IMR-90 (cell line): ENCODE measurements at regions of chr18 and their contacts with region 1.

Region 1: DNA sequence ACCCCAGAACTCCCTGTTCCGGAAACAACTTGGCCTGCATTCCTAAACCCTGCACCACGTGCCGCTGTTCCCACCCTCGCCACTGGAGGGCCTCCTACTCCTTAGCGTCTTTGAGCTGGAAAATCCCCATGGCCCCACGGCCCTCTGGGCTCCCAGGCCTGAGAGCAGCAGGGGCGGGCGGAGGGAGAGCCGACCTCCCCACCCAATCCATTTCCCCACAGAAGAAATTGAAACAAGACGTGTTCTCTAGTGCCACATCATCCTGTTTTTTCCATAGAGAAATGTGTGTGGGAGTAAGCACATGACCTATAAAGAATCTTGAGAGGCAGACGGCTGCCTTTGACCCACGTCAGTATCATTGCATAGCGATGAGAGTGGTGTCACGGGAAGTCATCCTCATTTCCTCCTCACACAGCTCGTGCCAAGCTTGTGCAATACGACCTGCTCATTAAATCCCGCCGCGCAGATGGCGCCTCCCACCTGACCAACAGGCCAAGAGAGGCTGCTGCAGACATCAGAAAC is 79.2 kb downstream of the LAMA1 start:
- DNase-seq: peak; percentile 99
- ATAC-seq: peak; percentile 96
- H3K4me3 ChIP-seq: peak overlapping the region; percentile 2; the same call in 1 of the 2 replicates
- H3K27ac ChIP-seq: peak overlapping the region; percentile 93
- H3K4me1 ChIP-seq: peaks cover 10% of the 10 kb centered on the region
- H3K27me3 ChIP-seq: no peaks in the 10 kb centered on the region
- CTCF ChIP-seq: peak; percentile 89
- POLR2A ChIP-seq: no peak
- RAD21 ChIP-seq: peak; percentile 82

Region 2: DNA sequence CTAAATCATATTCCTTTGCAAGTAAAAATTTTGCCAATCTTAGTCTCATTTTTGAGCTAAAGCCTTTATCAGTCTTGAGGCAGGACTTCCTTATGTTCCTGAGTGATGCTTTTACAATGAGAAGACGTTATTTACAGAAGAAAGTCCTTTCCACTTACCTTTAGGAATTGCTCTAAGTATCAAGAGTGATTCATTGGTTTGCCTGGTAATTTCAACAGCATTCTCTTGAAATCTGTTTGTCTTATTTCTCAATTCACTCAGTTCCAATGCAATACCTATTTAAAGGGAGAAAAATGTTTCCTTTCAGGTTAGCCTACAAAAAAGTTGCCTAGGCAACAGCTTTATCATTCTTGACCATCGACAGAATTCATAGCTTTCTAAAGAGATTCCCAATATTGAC is 58.0 kb before region 1 on chr18:
- CTCF ChIA-PET with region 1: no interaction called
- POLR2A ChIA-PET with region 1: no interaction called
- dilution Hi-C with region 1: no loop called
- in situ Hi-C with region 1: no loop called
- intact Hi-C with region 1: no loop called
- DNase-seq: no peak
- ATAC-seq: no peak
- H3K4me3 ChIP-seq: no peak overlapping the region
- H3K27ac ChIP-seq: no peak overlapping the region
- H3K4me1 ChIP-seq: no peaks in the 10 kb centered on the region
- H3K27me3 ChIP-seq: no peaks in the 10 kb centered on the region
- CTCF ChIP-seq: no peak
- POLR2A ChIP-seq: no peak
- RAD21 ChIP-seq: no peak

Region 3: GRCh38 chr18:7084080-7085075 is 46.0 kb after region 1 on chr18:
- CTCF ChIA-PET with region 1: no interaction called
- POLR2A ChIA-PET with region 1: no interaction called
- dilution Hi-C with region 1: no loop called
- in situ Hi-C with region 1: no loop called
- intact Hi-C with region 1: loop called (anchors 1 kb)
- DNase-seq: peak; percentile 86
- ATAC-seq: peak; percentile 80
- H3K4me3 ChIP-seq: no peak overlapping the region
- H3K27ac ChIP-seq: peak overlapping the region; percentile 64; the same call in 1 of the 2 replicates
- H3K4me1 ChIP-seq: peaks cover 2% of the 10 kb centered on the region; the same call in 1 of the 2 replicates
- H3K27me3 ChIP-seq: no peaks in the 10 kb centered on the region
- CTCF ChIP-seq: no peak
- POLR2A ChIP-seq: no peak
- RAD21 ChIP-seq: no peak

Region 4: GRCh38 chr18:7117390-7118355 is 79.3 kb after region 1 on chr18 and contains the start of gene LAMA1:
- CTCF ChIA-PET with region 1: interaction called, 3 read pairs
- POLR2A ChIA-PET with region 1: no interaction called
- dilution Hi-C with region 1: no loop called
- in situ Hi-C with region 1: no loop called
- intact Hi-C with region 1: loop called (anchors 1 kb)
- DNase-seq: peak; percentile 10
- ATAC-seq: peak; percentile 89
- H3K4me3 ChIP-seq: peak within 1 kb of the TSS; percentile 65
- H3K27ac ChIP-seq: no peak within 1 kb of the TSS; the same call in 1 of the 2 replicates
- H3K4me1 ChIP-seq: 0 out of 2 replicates have a peak, but pooled peaks cover 2% of the 10 kb centered on the region
- H3K27me3 ChIP-seq: peaks cover 3% of the 10 kb centered on the region; the same call in 1 of the 2 replicates
- CTCF ChIP-seq: no peak
- POLR2A ChIP-seq: no peak
- RAD21 ChIP-seq: no peak
- total RNA-seq, gene LAMA1: 10.9 and 11.4 TPM in 2 replicates